ENCODE measurements at regions of chr6 and their contacts with region 1.

Region 1: DNA sequence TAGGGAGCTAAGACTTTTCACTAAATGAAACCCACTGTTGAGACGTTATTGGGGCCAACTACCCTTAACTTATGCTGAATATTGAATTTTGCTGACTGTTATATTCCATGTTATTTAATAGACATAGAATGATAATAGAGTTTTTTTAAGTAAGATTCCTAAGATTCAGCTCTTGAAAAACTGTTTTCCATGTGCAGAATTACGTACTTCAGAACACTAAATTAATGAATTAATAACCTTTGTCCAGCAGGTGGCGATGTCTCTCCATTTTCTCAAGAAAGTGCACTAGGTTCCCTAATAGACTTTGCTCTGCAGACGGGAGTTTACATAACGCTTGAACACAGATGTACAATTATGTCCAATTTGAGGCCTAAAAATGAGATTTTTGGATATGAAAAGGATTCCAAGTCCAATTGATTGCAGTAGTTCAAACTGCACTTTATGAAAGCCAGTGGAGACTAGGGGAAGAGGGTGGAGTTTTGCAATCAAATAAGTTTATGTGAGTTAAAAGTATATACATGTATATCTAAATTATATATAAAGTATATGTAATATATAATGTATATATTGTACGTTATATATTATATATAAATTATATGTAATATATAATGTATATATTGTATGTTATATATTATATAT is 282.1 kb downstream of the UST start:
- DNase-seq: peak; percentile 82
- H3K4me3 ChIP-seq: no peak overlapping the region
- H3K27ac ChIP-seq: no peak overlapping the region
- H3K4me1 ChIP-seq: no peaks in the 10 kb centered on the region
- H3K27me3 ChIP-seq: peaks cover 0 to 3% of the 10 kb centered on the region in 2 experiments
- CTCF ChIP-seq: peak; percentile 36 to 40
- POLR2A ChIP-seq: no peak

Region 2: GRCh38 chr6:148559848-148560433 is 468.9 kb before region 1 on chr6:
- CTCF ChIA-PET with region 1: interaction called, 4 read pairs
- POLR2A ChIA-PET with region 1: no interaction called
- dilution Hi-C with region 1: no loop called
- intact Hi-C with region 1: loop called (anchors 5 kb)
- DNase-seq: peak; percentile 64
- H3K4me3 ChIP-seq: peak overlapping the region in 2 of 3 experiments; percentile 36 to 41
- H3K27ac ChIP-seq: no peak overlapping the region
- H3K4me1 ChIP-seq: no peaks in the 10 kb centered on the region
- H3K27me3 ChIP-seq: no peaks in the 10 kb centered on the region
- CTCF ChIP-seq: peak; percentile 96 to 99
- POLR2A ChIP-seq: no peak

Region 3: GRCh38 chr6:148962854-148963515 is 65.9 kb before region 1 on chr6:
- CTCF ChIA-PET with region 1: no interaction called
- POLR2A ChIA-PET with region 1: no interaction called
- dilution Hi-C with region 1: no loop called
- intact Hi-C with region 1: no loop called
- DNase-seq: no peak
- H3K4me3 ChIP-seq: no peak overlapping the region
- H3K27ac ChIP-seq: no peak overlapping the region
- H3K4me1 ChIP-seq: no peaks in the 10 kb centered on the region
- H3K27me3 ChIP-seq: no peaks in the 10 kb centered on the region
- CTCF ChIP-seq: no peak
- POLR2A ChIP-seq: no peak

Region 4: DNA sequence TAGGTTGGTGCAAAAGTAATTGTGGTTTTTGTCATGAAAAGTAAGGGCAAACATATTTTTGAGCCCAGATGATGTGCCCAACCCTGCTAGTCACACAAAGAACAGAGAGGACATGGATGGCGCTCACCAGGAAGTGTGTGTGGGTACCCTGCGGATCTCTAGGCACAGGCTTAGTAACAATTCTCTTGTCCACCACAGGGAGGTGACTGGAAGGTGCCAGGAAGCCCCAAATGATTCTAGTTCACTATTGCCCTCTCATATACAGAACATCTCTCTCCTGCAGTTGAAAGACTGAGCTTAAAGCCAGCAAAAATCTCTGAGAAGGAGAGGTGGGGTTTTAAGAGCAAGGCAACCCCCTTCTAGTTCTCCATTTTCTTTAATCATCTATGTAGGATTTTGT is 16.5 kb after region 1 on chr6:
- CTCF ChIA-PET with region 1: interaction called, 14 read pairs
- POLR2A ChIA-PET with region 1: no interaction called
- dilution Hi-C with region 1: no loop called
- intact Hi-C with region 1: no loop called
- DNase-seq: no peak
- H3K4me3 ChIP-seq: no peak overlapping the region
- H3K27ac ChIP-seq: no peak overlapping the region
- H3K4me1 ChIP-seq: peaks cover 13% of the 10 kb centered on the region
- H3K27me3 ChIP-seq: no peaks in the 10 kb centered on the region
- CTCF ChIP-seq: no peak
- POLR2A ChIP-seq: no peak

Region 5: GRCh38 chr6:149082286-149082707 is 53.4 kb after region 1 on chr6:
- CTCF ChIA-PET with region 1: interaction called, 20 read pairs
- POLR2A ChIA-PET with region 1: no interaction called
- dilution Hi-C with region 1: no loop called
- intact Hi-C with region 1: loop called (anchors 1 kb)
- DNase-seq: peak; percentile 62
- H3K4me3 ChIP-seq: no peak overlapping the region
- H3K27ac ChIP-seq: no peak overlapping the region
- H3K4me1 ChIP-seq: no peaks in the 10 kb centered on the region
- H3K27me3 ChIP-seq: peaks cover 18 to 25% of the 10 kb centered on the region in 2 experiments
- CTCF ChIP-seq: peak; percentile 74 to 81
- POLR2A ChIP-seq: no peak

Region 6: GRCh38 chr6:149431905-149432775 is 403.3 kb after region 1 on chr6:
- CTCF ChIA-PET with region 1: interaction called, 193 read pairs
- POLR2A ChIA-PET with region 1: no interaction called
- dilution Hi-C with region 1: no loop called
- intact Hi-C with region 1: loop called (anchors 1 kb)
- DNase-seq: peak; percentile 70
- H3K4me3 ChIP-seq: no peak overlapping the region
- H3K27ac ChIP-seq: no peak overlapping the region
- H3K4me1 ChIP-seq: no peaks in the 10 kb centered on the region
- H3K27me3 ChIP-seq: no peaks in the 10 kb centered on the region
- CTCF ChIP-seq: peak; percentile 91
- POLR2A ChIP-seq: no peak

Region 7: GRCh38 chr6:149513915-149514314 is 485.0 kb after region 1 on chr6:
- CTCF ChIA-PET with region 1: interaction called, 57 read pairs
- POLR2A ChIA-PET with region 1: no interaction called
- dilution Hi-C with region 1: no loop called
- intact Hi-C with region 1: loop called (anchors 1 kb)
- DNase-seq: no peak
- H3K4me3 ChIP-seq: no peak overlapping the region
- H3K27ac ChIP-seq: no peak overlapping the region
- H3K4me1 ChIP-seq: no peaks in the 10 kb centered on the region
- H3K27me3 ChIP-seq: no peaks in the 10 kb centered on the region
- CTCF ChIP-seq: no peak
- POLR2A ChIP-seq: no peak

Measured in endothelial cell of umbilical vein (primary cell).